Activated CD8-positive, alpha-beta T cell treated with anti-CD3 and anti-CD28 coated beads, Interleukin-2, amount 10 ng/mL, durations not matched to agents 7 days and 5 days (primary cell): ENCODE measurements at regions of chr20 and their contacts with region 1.

Region 1: GRCh38 chr20:47620808-47621805 is 119.4 kb downstream of the NCOA3 start:
- DNase-seq: peak; percentile 38
- ATAC-seq: peak; percentile 44
- H3K4me3 Mint-ChIP-seq: no peak overlapping the region
- H3K27ac Mint-ChIP-seq: no peak overlapping the region
- H3K4me1 Mint-ChIP-seq: peaks cover 38% of the 10 kb centered on the region
- H3K27me3 Mint-ChIP-seq: no peaks in the 10 kb centered on the region

Region 2: DNA sequence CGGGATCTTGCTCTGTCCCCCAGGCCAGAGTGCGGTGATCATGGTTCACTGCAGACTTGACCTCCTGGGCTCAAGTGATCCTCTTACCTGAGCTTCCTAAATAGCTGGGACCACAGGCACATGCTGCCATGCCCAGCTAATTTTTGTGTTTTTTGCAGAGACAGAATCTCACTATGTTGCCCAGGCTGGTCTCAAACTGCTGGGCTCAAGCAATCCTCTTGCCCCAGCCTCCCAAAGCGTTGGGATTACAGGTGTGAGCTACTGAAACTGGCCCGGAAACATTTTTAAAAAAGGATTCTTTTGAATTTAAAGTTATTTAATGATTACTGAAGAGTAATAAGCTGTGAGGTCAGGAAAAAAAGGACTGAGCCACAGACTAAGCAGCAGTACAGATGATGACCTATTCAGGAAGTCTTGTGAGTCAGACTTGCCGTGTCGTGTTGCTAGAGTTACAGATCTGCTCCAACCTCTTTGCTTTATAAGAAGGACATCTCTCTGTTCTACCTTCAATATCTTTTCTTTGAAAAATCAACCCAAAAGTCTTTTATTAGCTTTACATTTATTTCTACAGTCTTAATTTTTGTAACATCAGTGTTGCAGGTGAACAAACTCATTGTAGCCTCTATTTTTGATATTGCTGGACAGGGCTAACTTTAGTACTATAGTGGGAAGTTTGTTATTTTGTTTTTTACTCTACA is 10.7 kb before region 1 on chr20:
- CTCF ChIA-PET with region 1: interaction called, 30 read pairs
- POLR2A ChIA-PET with region 1: interaction called, 4 read pairs
- DNase-seq: peak; percentile 89
- ATAC-seq: peak; percentile 87
- H3K4me3 Mint-ChIP-seq: peak overlapping the region; percentile 69
- H3K27ac Mint-ChIP-seq: peak overlapping the region; percentile 94
- H3K4me1 Mint-ChIP-seq: peaks cover 80% of the 10 kb centered on the region
- H3K27me3 Mint-ChIP-seq: no peaks in the 10 kb centered on the region